Activated T-helper 1 cell treated with anti-CD3 and anti-CD28 coated beads, Interleukin-12 subunit alpha, Interleukin-12 subunit beta, Interleukin-2, Interleukin-4 antibody, amounts not matched to agents 30 ng/mL and 10 ng/mL and 1 ng/mL, durations not matched to agents 14 hours and 24 hours and 36 hours (primary cell): ENCODE measurements at regions of chr6 and their contacts with region 1.

Region 1: GRCh38 chr6:36027501-36028087 is at the start of gene MAPK14:
- DNase-seq: peak; percentile 99
- H3K4me3 Mint-ChIP-seq: peak within 1 kb of the TSS; percentile 92
- H3K27ac Mint-ChIP-seq: peak within 1 kb of the TSS; percentile 85
- H3K4me1 Mint-ChIP-seq: peaks cover 39% of the 10 kb centered on the region
- H3K27me3 Mint-ChIP-seq: peaks cover 27% of the 10 kb centered on the region
- total RNA-seq, gene MAPK14: 41.3 and 49.7 TPM in 2 replicates

Region 2: GRCh38 chr6:35804996-35805736 is 222.4 kb before region 1 on chr6 and contains the start of gene LHFPL5:
- intact Hi-C with region 1: loop called (anchors 1 kb)
- DNase-seq: peak; percentile 62
- H3K4me3 Mint-ChIP-seq: no peak within 1 kb of the TSS
- H3K27ac Mint-ChIP-seq: no peak within 1 kb of the TSS
- H3K4me1 Mint-ChIP-seq: no peaks in the 10 kb centered on the region
- H3K27me3 Mint-ChIP-seq: peaks cover 3% of the 10 kb centered on the region
- total RNA-seq, gene LHFPL5: not detected in 2 replicates

Region 3: GRCh38 chr6:36052097-36052496 is 24.5 kb after region 1 on chr6:
- intact Hi-C with region 1: no loop called
- DNase-seq: no peak
- H3K4me3 Mint-ChIP-seq: no peak overlapping the region
- H3K27ac Mint-ChIP-seq: no peak overlapping the region
- H3K4me1 Mint-ChIP-seq: peaks cover 9% of the 10 kb centered on the region
- H3K27me3 Mint-ChIP-seq: no peaks in the 10 kb centered on the region

Region 4: GRCh38 chr6:36094753-36095496 is 67.3 kb after region 1 on chr6:
- intact Hi-C with region 1: loop called (anchors 1 kb)
- DNase-seq: peak; percentile 67
- H3K4me3 Mint-ChIP-seq: no peak overlapping the region
- H3K27ac Mint-ChIP-seq: peak overlapping the region; percentile 47
- H3K4me1 Mint-ChIP-seq: peaks cover 30% of the 10 kb centered on the region
- H3K27me3 Mint-ChIP-seq: no peaks in the 10 kb centered on the region

Region 5: DNA sequence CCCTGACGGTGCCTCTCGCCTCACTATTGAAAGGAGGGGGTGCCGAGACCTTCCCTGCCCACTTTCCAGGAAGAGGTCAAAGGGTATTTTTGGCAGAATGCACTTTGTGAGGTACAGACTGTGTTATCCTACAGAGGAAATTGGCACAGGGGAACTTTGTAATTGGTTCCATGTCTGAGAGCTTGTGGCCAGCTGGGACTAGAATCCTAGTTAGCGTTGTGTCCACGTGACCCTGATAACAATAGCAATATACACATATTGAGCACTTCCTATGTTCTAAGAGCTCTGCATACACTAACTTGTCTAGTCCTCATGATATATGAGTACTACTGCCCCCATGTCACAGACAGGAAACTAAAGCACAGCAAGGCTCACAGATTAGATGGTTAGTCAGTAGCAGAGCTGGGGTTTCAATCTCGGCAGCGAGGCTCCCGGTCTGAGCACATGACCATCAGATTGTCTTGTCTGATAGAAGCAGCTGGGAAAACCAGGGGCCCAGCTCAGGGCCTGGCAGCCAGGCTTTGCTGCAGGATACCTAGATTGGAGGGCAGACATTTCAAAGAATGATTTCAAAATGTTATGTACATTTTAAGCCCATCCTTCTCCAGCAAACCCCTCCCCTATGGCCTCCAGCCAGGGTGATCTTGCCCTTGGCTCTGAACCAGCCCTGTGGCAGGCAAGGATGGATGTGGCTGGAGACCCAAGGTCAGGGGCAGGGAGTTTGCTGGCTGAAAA is 104.1 kb after region 1 on chr6:
- intact Hi-C with region 1: loop called (anchors 1 kb)
- DNase-seq: peak; percentile 37
- H3K4me3 Mint-ChIP-seq: peak overlapping the region; percentile 85
- H3K27ac Mint-ChIP-seq: peak overlapping the region; percentile 92
- H3K4me1 Mint-ChIP-seq: peaks cover 50% of the 10 kb centered on the region
- H3K27me3 Mint-ChIP-seq: no peaks in the 10 kb centered on the region

Region 6: DNA sequence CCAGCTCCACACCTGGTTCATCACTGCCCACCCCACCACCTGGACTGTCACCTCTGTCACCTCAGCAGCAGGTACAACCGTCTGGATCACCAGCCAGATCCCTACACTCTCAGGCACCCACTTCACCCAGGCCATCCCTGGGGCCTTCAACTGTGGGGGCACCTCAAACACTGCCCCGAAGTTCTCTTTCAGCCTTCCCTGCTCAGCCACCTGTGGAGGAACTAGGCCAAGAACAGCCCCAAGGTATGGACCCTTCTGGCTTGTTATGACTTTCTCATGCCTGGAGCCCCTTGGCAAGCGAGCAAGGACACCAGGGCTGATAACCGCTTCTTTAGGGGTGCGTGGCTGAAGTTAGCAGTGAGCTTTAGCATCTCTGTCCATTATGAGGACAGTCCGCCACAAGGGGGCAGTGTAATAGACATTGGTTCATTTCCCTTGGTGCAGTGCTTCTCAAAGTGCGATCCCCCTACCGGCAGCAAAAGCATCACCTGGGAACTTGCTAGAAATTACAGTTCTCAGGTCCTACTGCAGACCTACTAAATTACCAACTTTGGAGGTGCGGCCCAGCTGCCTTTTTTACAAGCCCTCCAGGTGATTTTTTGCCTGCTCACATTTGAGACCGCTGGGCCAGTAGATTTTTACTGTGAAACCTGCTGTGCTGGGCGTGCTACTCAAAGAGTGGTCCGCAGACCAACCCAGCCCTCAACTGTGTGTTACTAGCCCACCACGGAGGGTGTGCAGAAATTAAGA is 274.8 kb after region 1 on chr6:
- intact Hi-C with region 1: loop called (anchors 1 kb)
- DNase-seq: peak; percentile 85
- H3K4me3 Mint-ChIP-seq: no peak overlapping the region
- H3K27ac Mint-ChIP-seq: peak overlapping the region; percentile 18
- H3K4me1 Mint-ChIP-seq: peaks cover 8% of the 10 kb centered on the region
- H3K27me3 Mint-ChIP-seq: peaks cover 24% of the 10 kb centered on the region

Region 7: GRCh38 chr6:36423101-36423824 is 395.7 kb after region 1 on chr6:
- intact Hi-C with region 1: loop called (anchors 5 kb)
- DNase-seq: peak; percentile 97
- H3K4me3 Mint-ChIP-seq: peak overlapping the region; percentile 88
- H3K27ac Mint-ChIP-seq: peak overlapping the region; percentile 84
- H3K4me1 Mint-ChIP-seq: peaks cover 21% of the 10 kb centered on the region
- H3K27me3 Mint-ChIP-seq: peaks cover 11% of the 10 kb centered on the region

Region 8: GRCh38 chr6:36594029-36594815 is 566.6 kb after region 1 on chr6 and contains the start of gene SRSF3:
- intact Hi-C with region 1: loop called (anchors 2 kb)
- DNase-seq: peak; percentile 96
- H3K4me3 Mint-ChIP-seq: peak within 1 kb of the TSS; percentile 97
- H3K27ac Mint-ChIP-seq: peak within 1 kb of the TSS; percentile 100
- H3K4me1 Mint-ChIP-seq: peaks cover 44% of the 10 kb centered on the region
- H3K27me3 Mint-ChIP-seq: no peaks in the 10 kb centered on the region
- total RNA-seq, gene SRSF3: 525 and 546 TPM in 2 replicates